MCF 10A (cell line): ENCODE measurements at regions of chr15 and their contacts with region 1.

Region 1: GRCh38 chr15:73697033-73697467 is 12.9 kb downstream of the CD276 start:
- DNase-seq: peak; percentile 89
- H3K4me3 Mint-ChIP-seq: peak overlapping the region; percentile 39
- H3K27ac Mint-ChIP-seq: peak overlapping the region; percentile 72
- H3K4me1 Mint-ChIP-seq: peaks cover 58% of the 10 kb centered on the region
- H3K27me3 Mint-ChIP-seq: no peaks in the 10 kb centered on the region
- CTCF ChIP-seq: no peak

Region 2: GRCh38 chr15:73560501-73561117 is 136.4 kb before region 1 on chr15:
- CTCF ChIA-PET with region 1: interaction called, 55 read pairs
- POLR2A ChIA-PET with region 1: interaction called, 13 read pairs
- intact Hi-C with region 1: loop called (anchors 1 kb)
- DNase-seq: peak; percentile 72
- H3K4me3 Mint-ChIP-seq: no peak overlapping the region
- H3K27ac Mint-ChIP-seq: no peak overlapping the region
- H3K4me1 Mint-ChIP-seq: peaks cover 7% of the 10 kb centered on the region
- H3K27me3 Mint-ChIP-seq: no peaks in the 10 kb centered on the region
- CTCF ChIP-seq: peak; percentile 51

Region 3: DNA sequence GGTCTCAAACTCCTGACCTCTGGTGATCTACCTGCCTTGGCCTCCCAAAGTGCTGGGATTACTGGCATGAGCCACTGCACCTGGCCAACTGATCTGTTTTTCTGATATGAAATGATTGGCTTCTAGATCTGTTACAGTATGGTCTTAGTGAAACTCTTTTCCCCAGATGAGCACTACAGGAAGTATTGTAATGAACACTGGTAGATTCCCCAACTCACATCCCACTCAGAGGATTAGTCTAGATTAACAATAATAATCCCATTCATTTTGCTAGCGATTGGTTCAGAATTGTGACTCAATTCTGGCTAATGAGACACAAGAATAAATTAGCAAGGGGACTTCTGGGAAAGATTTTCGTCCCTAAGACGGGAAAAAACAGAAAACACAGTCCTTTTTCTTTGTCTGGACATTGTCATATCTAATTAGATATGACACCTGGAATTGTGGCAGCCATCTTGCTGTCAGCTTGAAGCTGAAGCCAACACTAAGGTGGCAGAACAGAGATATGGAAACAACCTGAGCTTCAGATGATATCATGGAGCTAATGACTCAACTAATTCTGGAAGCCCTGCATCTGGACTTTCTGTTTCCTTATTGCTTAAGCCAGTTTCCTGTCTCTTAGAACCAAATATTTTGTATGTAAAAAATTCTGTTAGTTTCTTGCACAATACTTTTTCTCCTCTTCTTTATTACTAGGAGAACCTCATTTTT is 46.5 kb before region 1 on chr15:
- CTCF ChIA-PET with region 1: interaction called, 4 read pairs
- POLR2A ChIA-PET with region 1: no interaction called
- intact Hi-C with region 1: loop called (anchors 1 kb)
- DNase-seq: peak; percentile 66
- H3K4me3 Mint-ChIP-seq: no peak overlapping the region
- H3K27ac Mint-ChIP-seq: peak overlapping the region; percentile 44
- H3K4me1 Mint-ChIP-seq: peaks cover 32% of the 10 kb centered on the region
- H3K27me3 Mint-ChIP-seq: no peaks in the 10 kb centered on the region
- CTCF ChIP-seq: no peak

Region 4: GRCh38 chr15:73683777-73684580 is 13.1 kb before region 1 on chr15 and contains the start of gene CD276:
- CTCF ChIA-PET with region 1: interaction called, 98 read pairs
- POLR2A ChIA-PET with region 1: interaction called, 67 read pairs
- intact Hi-C with region 1: no loop called
- DNase-seq: peak; percentile 64
- H3K4me3 Mint-ChIP-seq: peak within 1 kb of the TSS; percentile 82
- H3K27ac Mint-ChIP-seq: peak within 1 kb of the TSS; percentile 69
- H3K4me1 Mint-ChIP-seq: peaks cover 41% of the 10 kb centered on the region
- H3K27me3 Mint-ChIP-seq: no peaks in the 10 kb centered on the region
- CTCF ChIP-seq: no peak
- total RNA-seq, gene CD276: 52.8 and 57.7 TPM in 2 replicates

Region 5: DNA sequence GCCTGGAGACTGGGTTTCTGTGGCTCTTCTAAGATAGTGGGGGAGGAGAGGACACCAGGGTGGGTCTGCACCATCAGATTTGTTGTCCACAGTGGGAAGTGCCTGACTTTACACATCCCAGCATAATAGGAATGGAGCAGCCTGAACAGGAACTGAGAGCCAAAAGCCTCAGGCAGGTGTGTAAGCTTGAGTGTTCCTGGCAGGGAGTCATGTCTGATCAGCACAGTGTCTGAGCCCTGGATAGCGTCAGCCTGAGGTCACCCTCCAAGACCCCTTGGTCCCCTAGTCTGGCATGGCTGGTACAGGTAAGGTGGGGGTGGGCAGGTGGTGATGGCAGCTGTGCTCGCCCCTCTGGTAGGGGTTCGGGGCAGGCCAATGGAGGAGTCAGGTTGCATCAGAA is 35.9 kb after region 1 on chr15:
- CTCF ChIA-PET with region 1: no interaction called
- POLR2A ChIA-PET with region 1: no interaction called
- intact Hi-C with region 1: no loop called
- DNase-seq: no peak
- H3K4me3 Mint-ChIP-seq: no peak overlapping the region
- H3K27ac Mint-ChIP-seq: no peak overlapping the region
- H3K4me1 Mint-ChIP-seq: no peaks in the 10 kb centered on the region
- H3K27me3 Mint-ChIP-seq: no peaks in the 10 kb centered on the region
- CTCF ChIP-seq: no peak

Region 6: DNA sequence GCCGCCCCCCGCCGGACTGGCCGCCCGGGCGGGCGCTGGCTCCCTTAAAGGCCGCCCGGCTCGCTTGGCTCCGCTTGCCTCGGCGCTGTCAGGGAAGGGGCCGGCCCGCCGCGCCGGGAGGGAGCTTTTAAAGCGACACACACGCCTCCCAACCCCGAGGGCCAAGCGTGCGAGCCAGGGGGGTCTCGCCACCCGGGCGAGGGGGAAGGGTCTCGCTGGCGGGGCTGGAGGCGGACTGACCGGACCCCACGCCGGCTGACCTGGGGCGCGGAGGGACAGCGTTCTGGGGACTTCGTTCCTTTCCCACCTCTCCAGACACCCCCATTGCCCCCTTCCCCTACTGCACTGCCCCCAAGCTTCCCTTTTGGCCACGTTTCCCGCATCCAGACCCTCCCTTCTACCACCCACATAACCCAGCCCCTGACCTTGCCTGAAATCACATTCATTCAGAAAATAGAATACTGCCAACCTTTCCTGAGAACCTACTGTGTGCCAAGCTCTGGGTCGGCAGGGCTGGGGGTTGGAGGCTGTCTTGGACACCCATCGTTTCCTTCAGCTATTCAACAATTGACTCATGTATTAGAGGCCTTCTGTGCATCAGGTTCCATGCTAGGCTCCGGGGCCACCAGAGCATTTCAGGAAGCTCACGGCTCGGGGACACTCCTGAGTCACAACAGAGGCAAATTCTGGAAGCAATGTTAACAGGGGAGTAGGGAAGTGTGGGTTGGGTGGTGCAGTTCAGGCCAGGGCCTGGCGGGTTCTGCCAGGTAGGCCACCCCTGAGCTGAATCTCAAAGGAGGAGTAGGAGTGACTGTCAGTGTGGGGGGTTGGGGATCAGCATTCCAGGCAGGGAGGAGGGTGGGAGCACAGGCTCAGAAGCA is 56.4 kb after region 1 on chr15 and contains the start of gene INSYN1:
- CTCF ChIA-PET with region 1: no interaction called
- POLR2A ChIA-PET with region 1: no interaction called
- intact Hi-C with region 1: no loop called
- DNase-seq: no peak
- H3K4me3 Mint-ChIP-seq: peak within 1 kb of the TSS; percentile 28
- H3K27ac Mint-ChIP-seq: no peak within 1 kb of the TSS
- H3K4me1 Mint-ChIP-seq: no peaks in the 10 kb centered on the region
- H3K27me3 Mint-ChIP-seq: peaks cover 53% of the 10 kb centered on the region
- CTCF ChIP-seq: no peak
- total RNA-seq, gene INSYN1: not detected in 2 replicates

Region 7: GRCh38 chr15:73781038-73781925 is 84.2 kb after region 1 on chr15:
- CTCF ChIA-PET with region 1: no interaction called
- POLR2A ChIA-PET with region 1: no interaction called
- intact Hi-C with region 1: loop called (anchors 5 kb)
- DNase-seq: peak; percentile 55
- H3K4me3 Mint-ChIP-seq: no peak overlapping the region
- H3K27ac Mint-ChIP-seq: no peak overlapping the region
- H3K4me1 Mint-ChIP-seq: no peaks in the 10 kb centered on the region
- H3K27me3 Mint-ChIP-seq: no peaks in the 10 kb centered on the region
- CTCF ChIP-seq: peak; percentile 38